ENCODE measurements at regions of chr2 and their contacts with region 1.

Region 1: DNA sequence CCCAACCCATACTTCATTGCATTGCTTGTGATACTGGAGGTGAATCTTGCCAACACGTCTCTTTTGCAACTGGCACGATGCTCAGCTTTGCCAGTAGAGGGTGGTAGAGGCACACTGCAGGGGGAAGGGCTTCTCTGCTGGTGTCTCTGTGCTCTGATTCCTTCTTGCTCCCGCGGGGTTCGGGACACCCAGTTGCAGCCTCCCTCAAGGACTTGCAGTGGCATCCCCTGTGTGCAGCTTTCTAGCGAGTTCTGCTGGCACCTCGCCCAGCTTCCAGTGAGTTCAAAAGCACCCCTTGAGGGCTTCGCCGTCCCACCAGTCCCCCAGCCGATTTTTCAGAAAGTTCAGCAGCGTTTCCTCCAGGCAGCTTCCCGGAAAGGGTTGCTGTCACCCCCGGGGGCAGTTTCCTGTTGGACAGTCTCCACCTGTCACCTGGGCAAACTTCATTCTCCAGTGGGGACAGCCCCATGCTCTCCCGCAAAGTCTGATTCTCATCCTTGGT is 35.3 kb upstream of the EN1 start:
- DNase-seq: peak; percentile 40 to 84 (median 59)
- ATAC-seq: peak; percentile 81
- H3K4me3 ChIP-seq: peak overlapping the region; percentile 16 to 36
- H3K4me3 Mint-ChIP-seq: peak overlapping the region; percentile 75
- H3K27ac ChIP-seq: no peak overlapping the region
- H3K27ac Mint-ChIP-seq: peak overlapping the region; percentile 58
- H3K4me1 ChIP-seq: peaks cover 15% of the 10 kb centered on the region
- H3K4me1 Mint-ChIP-seq: peaks cover 22% of the 10 kb centered on the region
- H3K27me3 ChIP-seq: no peaks in the 10 kb centered on the region
- H3K27me3 Mint-ChIP-seq: peaks cover 5% of the 10 kb centered on the region
- CTCF ChIP-seq: peak; percentile 72

Region 2: GRCh38 chr2:118902266-118903028 is 19.7 kb after region 1 on chr2:
- CTCF ChIA-PET with region 1: interaction called, 16 read pairs
- POLR2A ChIA-PET with region 1: no interaction called
- intact Hi-C with region 1: no loop called
- DNase-seq: peak in 3 of 9 experiments; percentile 10 to 58 (median 28)
- ATAC-seq: no peak
- H3K4me3 ChIP-seq: peak overlapping the region in 1 of 2 experiments; percentile 8
- H3K4me3 Mint-ChIP-seq: peak overlapping the region; percentile 47
- H3K27ac ChIP-seq: peak overlapping the region; percentile 5 to 18
- H3K27ac Mint-ChIP-seq: peak overlapping the region; percentile 87
- H3K4me1 ChIP-seq: peaks cover 25% of the 10 kb centered on the region
- H3K4me1 Mint-ChIP-seq: peaks cover 28% of the 10 kb centered on the region
- H3K27me3 ChIP-seq: no peaks in the 10 kb centered on the region
- H3K27me3 Mint-ChIP-seq: peaks cover 5% of the 10 kb centered on the region
- CTCF ChIP-seq: no peak

Region 3: GRCh38 chr2:119011162-119011909 is 128.6 kb after region 1 on chr2:
- CTCF ChIA-PET with region 1: interaction called, 11 read pairs
- POLR2A ChIA-PET with region 1: no interaction called
- intact Hi-C with region 1: loop called in 1 of 2 experiments (anchors 1 kb)
- DNase-seq: peak in 2 of 9 experiments; percentile 7 to 14
- ATAC-seq: no peak
- H3K4me3 ChIP-seq: no peak overlapping the region
- H3K4me3 Mint-ChIP-seq: no peak overlapping the region
- H3K27ac ChIP-seq: no peak overlapping the region
- H3K27ac Mint-ChIP-seq: no peak overlapping the region
- H3K4me1 ChIP-seq: no peaks in the 10 kb centered on the region
- H3K4me1 Mint-ChIP-seq: peaks cover 2% of the 10 kb centered on the region
- H3K27me3 ChIP-seq: peaks cover 0 to 7% of the 10 kb centered on the region in 2 experiments
- H3K27me3 Mint-ChIP-seq: peaks cover 29% of the 10 kb centered on the region
- CTCF ChIP-seq: no peak

Region 4: DNA sequence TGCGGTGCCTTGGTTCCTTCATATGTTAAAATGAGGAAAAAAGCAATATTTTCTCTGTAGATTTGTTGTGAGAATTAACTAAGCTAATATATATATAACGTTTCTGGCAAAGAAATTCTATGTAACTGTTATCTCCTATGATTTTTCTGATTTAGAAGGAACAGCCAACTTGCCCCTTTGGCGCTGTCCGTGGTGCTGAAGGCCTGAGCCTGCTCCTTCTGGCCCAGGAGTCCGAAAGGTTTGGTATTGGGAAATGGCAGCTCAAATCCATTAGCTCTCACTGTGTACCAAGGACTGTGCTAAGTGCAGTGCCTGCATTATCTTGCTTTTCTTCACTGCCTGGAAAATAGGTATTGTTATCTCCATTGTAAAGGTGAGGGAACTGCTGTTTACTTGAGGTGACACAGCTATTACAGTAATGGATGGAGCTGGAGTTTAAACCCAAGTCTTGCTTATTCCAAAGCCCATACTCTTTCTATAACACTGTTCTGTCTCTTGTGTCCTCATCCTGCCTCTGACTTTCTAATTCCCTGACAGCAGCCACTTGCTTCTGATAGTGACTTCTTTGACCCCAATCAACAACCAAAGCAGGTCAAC is 223.6 kb after region 1 on chr2:
- CTCF ChIA-PET with region 1: no interaction called
- POLR2A ChIA-PET with region 1: no interaction called
- intact Hi-C with region 1: no loop called
- DNase-seq: peak in 4 of 9 experiments; percentile 14 to 53 (median 28)
- ATAC-seq: no peak
- H3K4me3 ChIP-seq: no peak overlapping the region
- H3K4me3 Mint-ChIP-seq: no peak overlapping the region
- H3K27ac ChIP-seq: no peak overlapping the region
- H3K27ac Mint-ChIP-seq: no peak overlapping the region
- H3K4me1 ChIP-seq: no peaks in the 10 kb centered on the region
- H3K4me1 Mint-ChIP-seq: no peaks in the 10 kb centered on the region
- H3K27me3 ChIP-seq: no peaks in the 10 kb centered on the region
- H3K27me3 Mint-ChIP-seq: peaks cover 11% of the 10 kb centered on the region
- CTCF ChIP-seq: no peak

Region 5: GRCh38 chr2:119126650-119127049 is 243.9 kb after region 1 on chr2:
- CTCF ChIA-PET with region 1: interaction called, 23 read pairs
- POLR2A ChIA-PET with region 1: no interaction called
- intact Hi-C with region 1: loop called in 1 of 2 experiments (anchors 1 kb)
- DNase-seq: peak in 6 of 9 experiments; percentile 17 to 57 (median 30)
- ATAC-seq: no peak
- H3K4me3 ChIP-seq: no peak overlapping the region
- H3K4me3 Mint-ChIP-seq: no peak overlapping the region
- H3K27ac ChIP-seq: no peak overlapping the region
- H3K27ac Mint-ChIP-seq: no peak overlapping the region
- H3K4me1 ChIP-seq: no peaks in the 10 kb centered on the region
- H3K4me1 Mint-ChIP-seq: peaks cover 2% of the 10 kb centered on the region
- H3K27me3 ChIP-seq: no peaks in the 10 kb centered on the region
- H3K27me3 Mint-ChIP-seq: peaks cover 19% of the 10 kb centered on the region
- CTCF ChIP-seq: peak; percentile 21

Region 6: GRCh38 chr2:119264781-119265692 is 382.3 kb after region 1 on chr2:
- CTCF ChIA-PET with region 1: interaction called, 17 read pairs
- POLR2A ChIA-PET with region 1: no interaction called
- intact Hi-C with region 1: loop called in 1 of 2 experiments (anchors 2 kb)
- DNase-seq: peak in 5 of 9 experiments; percentile 15 to 59 (median 27)
- ATAC-seq: no peak
- H3K4me3 ChIP-seq: no peak overlapping the region
- H3K4me3 Mint-ChIP-seq: no peak overlapping the region
- H3K27ac ChIP-seq: no peak overlapping the region
- H3K27ac Mint-ChIP-seq: no peak overlapping the region
- H3K4me1 ChIP-seq: no peaks in the 10 kb centered on the region
- H3K4me1 Mint-ChIP-seq: no peaks in the 10 kb centered on the region
- H3K27me3 ChIP-seq: no peaks in the 10 kb centered on the region
- H3K27me3 Mint-ChIP-seq: peaks cover 7% of the 10 kb centered on the region
- CTCF ChIP-seq: peak; percentile 32

Region 7: DNA sequence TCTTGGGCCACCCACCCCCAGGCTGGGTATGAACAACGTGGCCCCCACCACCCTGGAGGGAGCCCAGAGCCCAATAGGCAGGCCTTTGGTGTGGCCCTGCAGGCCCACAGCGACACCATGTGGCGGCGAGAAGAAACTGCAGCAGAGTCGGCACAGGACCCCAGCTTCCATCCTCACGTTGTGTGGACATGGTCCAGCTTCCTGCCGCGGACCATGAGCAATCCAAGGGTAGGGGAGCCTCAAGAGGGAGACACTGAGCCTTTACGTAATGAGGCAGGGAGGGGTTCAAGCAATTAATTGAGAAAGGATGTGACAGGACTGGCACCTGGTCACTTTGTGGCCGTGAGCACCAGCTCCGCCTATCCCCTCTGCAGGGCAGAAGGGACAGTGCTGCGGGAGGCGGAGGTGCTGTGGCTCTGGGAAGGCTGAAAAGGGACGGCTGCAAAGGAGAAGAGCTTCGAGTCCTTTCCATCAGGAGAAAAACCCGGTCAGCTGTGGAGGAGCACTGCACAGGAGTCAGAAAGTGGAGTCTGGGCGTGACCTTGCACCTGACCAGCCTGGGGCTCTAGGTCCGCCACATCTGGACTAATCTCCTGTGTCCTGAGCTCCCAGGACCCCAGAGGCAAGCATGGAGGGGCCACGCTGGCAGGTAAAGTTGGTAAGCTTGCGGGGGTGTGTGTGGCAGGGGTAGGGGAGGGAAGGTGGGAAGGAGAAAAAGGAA is 593.7 kb after region 1 on chr2:
- CTCF ChIA-PET with region 1: interaction called, 39 read pairs
- POLR2A ChIA-PET with region 1: no interaction called
- intact Hi-C with region 1: loop called in 1 of 2 experiments (anchors 1 kb)
- DNase-seq: peak in 7 of 9 experiments; percentile 8 to 60 (median 22)
- ATAC-seq: no peak
- H3K4me3 ChIP-seq: no peak overlapping the region
- H3K4me3 Mint-ChIP-seq: no peak overlapping the region
- H3K27ac ChIP-seq: no peak overlapping the region
- H3K27ac Mint-ChIP-seq: no peak overlapping the region
- H3K4me1 ChIP-seq: no peaks in the 10 kb centered on the region
- H3K4me1 Mint-ChIP-seq: no peaks in the 10 kb centered on the region
- H3K27me3 ChIP-seq: peaks cover 0 to 5% of the 10 kb centered on the region in 2 experiments
- H3K27me3 Mint-ChIP-seq: peaks cover 13% of the 10 kb centered on the region
- CTCF ChIP-seq: peak; percentile 74

Measured in CD8-positive, alpha-beta T cell (primary cell).